HepG2 (cell line): ENCODE measurements at regions of chr20 and their contacts with region 1.

Region 1: DNA sequence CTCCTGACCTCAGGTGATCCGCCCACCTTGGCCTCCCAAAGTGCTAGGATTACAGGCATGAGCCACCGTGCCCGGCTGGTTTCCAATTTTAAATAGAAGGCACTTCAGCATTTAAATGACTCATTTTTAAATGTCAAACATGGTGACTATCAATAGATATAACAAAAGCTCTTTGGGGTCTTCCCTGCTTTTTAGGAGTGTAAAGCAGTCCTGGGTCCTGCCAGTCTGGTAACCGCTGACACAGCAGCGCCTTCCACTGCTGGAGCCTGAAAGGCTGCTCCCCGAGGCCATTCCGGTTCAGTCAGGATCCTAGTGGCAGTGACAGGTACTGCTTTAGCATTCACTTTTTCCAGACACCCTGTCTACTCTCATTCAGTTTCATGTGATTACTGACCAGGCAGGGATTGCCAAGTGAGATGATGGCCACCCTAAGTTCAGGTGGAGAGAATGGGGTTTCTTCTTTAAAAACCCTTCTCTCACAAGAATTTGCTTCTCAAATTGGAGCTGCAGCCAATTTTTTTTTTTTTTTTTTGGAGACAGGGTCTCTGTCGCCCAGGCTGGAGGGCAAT is 5.1 kb downstream of the DIDO1 start:
- DNase-seq: peak; percentile 88
- ATAC-seq: peak; percentile 72
- H3K4me3 ChIP-seq: no peak overlapping the region
- H3K27ac ChIP-seq: peak overlapping the region; percentile 9
- H3K4me1 ChIP-seq: peaks cover 75% of the 10 kb centered on the region
- H3K27me3 ChIP-seq: peaks cover 0 to 5% of the 10 kb centered on the region in 2 experiments; a peak in 1 of 5 replicates
- CTCF ChIP-seq: peak; percentile 85
- EP300 ChIP-seq: no peak
- POLR2A ChIP-seq: 0 out of 4 replicates have a peak, but pooled peaks of 1 of the 2 experiments have one; percentile 26
- RAD21 ChIP-seq: peak; percentile 76

Region 2: GRCh38 chr20:62900052-62900691 is 21.0 kb before region 1 on chr20:
- CTCF ChIA-PET with region 1: interaction called, 17 read pairs
- POLR2A ChIA-PET with region 1: interaction called, 9 read pairs
- in situ Hi-C with region 1: no loop called
- intact Hi-C with region 1: loop called (anchors 1 kb)
- DNase-seq: peak; percentile 82
- ATAC-seq: peak; percentile 90
- H3K4me3 ChIP-seq: peak overlapping the region in 1 of 3 experiments; percentile 44; a peak in 2 of 6 replicates
- H3K27ac ChIP-seq: peak overlapping the region; percentile 23
- H3K4me1 ChIP-seq: peaks cover 32% of the 10 kb centered on the region
- H3K27me3 ChIP-seq: no peaks in the 10 kb centered on the region
- CTCF ChIP-seq: peak; percentile 98
- EP300 ChIP-seq: 0 out of 4 replicates have a peak, but pooled peaks of 1 of the 2 experiments have one; percentile 2
- POLR2A ChIP-seq: peak in 1 of 2 experiments; percentile 78; a peak in 2 of 4 replicates
- RAD21 ChIP-seq: peak; percentile 95

Region 3: GRCh38 chr20:62907384-62908317 is 13.6 kb before region 1 on chr20:
- CTCF ChIA-PET with region 1: interaction called, 13 read pairs
- POLR2A ChIA-PET with region 1: interaction called, 14 read pairs
- in situ Hi-C with region 1: no loop called
- intact Hi-C with region 1: no loop called
- DNase-seq: peak; percentile 58
- ATAC-seq: peak; percentile 75
- H3K4me3 ChIP-seq: no peak overlapping the region
- H3K27ac ChIP-seq: no peak overlapping the region
- H3K4me1 ChIP-seq: peaks cover 1% of the 10 kb centered on the region
- H3K27me3 ChIP-seq: no peaks in the 10 kb centered on the region
- CTCF ChIP-seq: peak; percentile 77
- EP300 ChIP-seq: no peak
- POLR2A ChIP-seq: no peak
- RAD21 ChIP-seq: peak; percentile 79